ENCODE measurements at regions of chr1 and their contacts with region 1.

Region 1: DNA sequence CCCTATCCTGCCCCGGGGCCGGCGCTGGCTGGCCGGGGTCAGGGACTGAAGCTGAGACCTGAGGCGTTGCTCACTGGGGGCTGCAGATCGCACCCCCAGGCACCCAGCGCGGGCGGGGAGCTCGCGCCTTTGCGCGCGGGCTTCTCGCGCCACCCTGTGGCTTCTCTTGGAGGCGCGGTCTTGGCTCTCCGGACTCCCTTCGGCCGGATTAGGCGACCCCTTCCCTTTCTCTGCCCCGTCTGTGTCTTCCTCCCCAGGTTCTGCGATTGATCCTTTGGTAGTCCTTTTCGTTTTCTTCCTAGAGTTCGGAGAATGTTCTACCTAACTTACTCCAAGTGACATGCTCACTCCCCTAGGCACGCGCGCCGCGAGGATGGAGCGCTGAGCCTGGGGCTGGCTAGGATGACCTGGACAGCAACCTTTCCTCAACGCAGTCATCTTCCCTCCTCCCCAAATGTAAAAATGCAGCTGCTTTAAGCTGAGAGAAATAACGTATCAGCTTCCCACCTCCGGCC is 495 bp upstream of the NTRK1 start:
- DNase-seq: peak; percentile 85
- CTCF ChIP-seq: peak; percentile 77

Region 2: GRCh38 chr1:156705918-156706656 is 154.1 kb before region 1 on chr1:
- CTCF ChIA-PET with region 1: interaction called, 10 read pairs
- POLR2A ChIA-PET with region 1: no interaction called
- DNase-seq: peak; percentile 88
- CTCF ChIP-seq: peak; percentile 67

Region 3: GRCh38 chr1:156781585-156782186 is 78.5 kb before region 1 on chr1:
- CTCF ChIA-PET with region 1: interaction called, 10 read pairs
- POLR2A ChIA-PET with region 1: no interaction called
- DNase-seq: no peak
- CTCF ChIP-seq: no peak

Region 4: GRCh38 chr1:156804572-156805243 is 55.5 kb before region 1 on chr1:
- CTCF ChIA-PET with region 1: interaction called, 131 read pairs
- POLR2A ChIA-PET with region 1: no interaction called
- DNase-seq: no peak
- CTCF ChIP-seq: no peak

Region 5: DNA sequence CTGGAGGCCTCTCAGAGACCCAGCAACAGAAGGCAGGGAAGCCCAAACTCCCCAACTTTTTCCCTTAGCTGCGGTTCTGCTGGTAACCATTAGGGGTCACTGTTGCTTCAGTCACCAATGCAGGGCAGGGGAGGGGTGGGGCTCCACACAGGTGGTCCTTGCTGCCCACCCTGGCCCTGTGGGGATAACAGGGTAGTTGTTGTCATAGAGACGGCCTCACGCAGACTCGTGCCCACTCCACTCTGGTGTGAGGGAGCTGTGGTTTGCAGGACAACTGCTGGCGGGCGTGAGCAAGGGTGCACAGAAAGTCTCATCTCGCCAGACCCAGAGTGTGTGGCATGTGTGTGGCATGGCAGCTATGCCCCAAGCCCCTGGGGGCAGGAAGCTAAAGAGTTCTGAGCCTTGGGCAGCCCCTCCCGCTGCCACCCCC is 21.2 kb before region 1 on chr1:
- CTCF ChIA-PET with region 1: interaction called, 149 read pairs
- POLR2A ChIA-PET with region 1: no interaction called
- DNase-seq: peak; percentile 75
- CTCF ChIP-seq: peak; percentile 86

Region 6: GRCh38 chr1:156892190-156893047 is 32.2 kb after region 1 on chr1:
- CTCF ChIA-PET with region 1: interaction called, 29 read pairs
- POLR2A ChIA-PET with region 1: no interaction called
- DNase-seq: peak; percentile 89
- CTCF ChIP-seq: peak; percentile 80

Region 7: GRCh38 chr1:156945881-156946661 is 85.9 kb after region 1 on chr1:
- CTCF ChIA-PET with region 1: no interaction called
- POLR2A ChIA-PET with region 1: no interaction called
- DNase-seq: no peak
- CTCF ChIP-seq: no peak

Measured in GM10248 (cell line).